Naive thymus-derived CD4-positive, alpha-beta T cell (primary cell): ENCODE measurements at regions of chr19 and their contacts with region 1.

Region 1: GRCh38 chr19:37906869-37907734 is at the start of gene SIPA1L3:
- DNase-seq: peak; percentile 77 to 91 (median 89)
- ATAC-seq: peak; percentile 99
- H3K4me3 ChIP-seq: peak within 1 kb of the TSS; percentile 99
- H3K4me3 Mint-ChIP-seq: peak within 1 kb of the TSS; percentile 69 to 96 (median 90)
- H3K27ac ChIP-seq: peak within 1 kb of the TSS; percentile 89
- H3K27ac Mint-ChIP-seq: peak within 1 kb of the TSS; percentile 67 to 95 (median 90)
- H3K4me1 ChIP-seq: peaks cover 6 to 9% of the 10 kb centered on the region in 2 donors
- H3K4me1 Mint-ChIP-seq: peaks cover 24 to 39% (median 35%) of the 10 kb centered on the region in 7 donors
- H3K27me3 ChIP-seq: no peaks in the 10 kb centered on the region
- H3K27me3 Mint-ChIP-seq: peaks cover 0 to 2% (median 0%) of the 10 kb centered on the region in 5 donors
- total RNA-seq, gene SIPA1L3: 17.4 to 38.7 (median 34.8) TPM

Region 2: DNA sequence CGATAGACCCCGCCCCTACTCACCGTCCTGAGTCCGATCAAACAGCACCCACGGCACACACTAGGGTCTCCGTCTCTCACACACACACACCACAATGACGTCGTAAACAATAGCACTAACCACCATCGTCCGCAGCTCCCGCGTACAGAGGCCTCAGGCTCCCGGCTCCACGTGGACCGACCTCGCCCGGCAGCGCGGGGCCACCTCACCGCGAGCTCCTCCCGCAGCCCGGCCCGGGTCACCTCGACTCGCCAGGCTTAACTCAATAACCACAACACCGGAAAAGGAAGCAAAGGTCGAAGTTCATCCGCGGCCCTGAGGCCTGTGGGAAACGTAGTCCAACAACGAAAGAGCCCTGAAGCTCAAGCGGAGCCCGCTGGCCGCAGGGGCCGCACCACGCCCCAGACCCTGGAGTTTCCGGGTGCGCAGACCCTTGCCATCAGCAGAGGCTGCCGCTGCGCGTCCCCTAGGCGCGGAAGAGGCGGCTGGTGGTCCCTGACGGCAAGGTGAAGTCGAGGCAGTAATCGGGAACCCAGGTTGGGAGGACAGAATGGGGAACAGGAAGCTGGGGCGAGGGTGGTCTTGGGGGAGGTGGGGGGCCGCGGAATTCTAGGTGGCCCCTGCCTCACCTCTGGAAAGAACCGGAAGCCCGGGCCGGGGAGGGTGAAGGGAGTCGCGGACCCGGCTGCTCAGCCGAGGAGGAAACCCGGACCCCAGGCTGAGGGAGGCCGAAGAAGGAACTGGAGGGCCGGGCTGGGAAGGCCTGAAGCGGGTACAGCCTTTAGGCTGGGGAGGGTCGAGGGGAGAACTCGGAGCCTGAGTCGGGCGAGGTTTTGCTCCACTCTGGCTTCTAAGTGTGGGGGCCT is 1333.8 kb before region 1 on chr19 and contains the start of gene ZNF529:
- CTCF ChIA-PET with region 1: no interaction called
- POLR2A ChIA-PET with region 1: no interaction called
- intact Hi-C with region 1: loop called in 1 of 2 experiments (anchors 5 kb)
- DNase-seq: peak; percentile 67 to 95 (median 85)
- ATAC-seq: peak; percentile 95
- H3K4me3 ChIP-seq: peak within 1 kb of the TSS; percentile 95
- H3K4me3 Mint-ChIP-seq: peak within 1 kb of the TSS; percentile 80 to 100 (median 93)
- H3K27ac ChIP-seq: peak within 1 kb of the TSS; percentile 98
- H3K27ac Mint-ChIP-seq: peak within 1 kb of the TSS; percentile 94 to 100 (median 98)
- H3K4me1 ChIP-seq: peaks cover 0 to 15% of the 10 kb centered on the region in 2 donors
- H3K4me1 Mint-ChIP-seq: peaks cover 23 to 46% (median 40%) of the 10 kb centered on the region in 7 donors
- H3K27me3 ChIP-seq: no peaks in the 10 kb centered on the region
- H3K27me3 Mint-ChIP-seq: no peaks in the 10 kb centered on the region
- total RNA-seq, gene ZNF529: 22.6 to 37.8 (median 33.8) TPM

Region 3: GRCh38 chr19:37594304-37594981 is 312.7 kb before region 1 on chr19 and contains the starts of genes ZNF540 and ZNF571:
- CTCF ChIA-PET with region 1: no interaction called
- POLR2A ChIA-PET with region 1: interaction called, 5 read pairs
- intact Hi-C with region 1: loop called in 1 of 2 experiments (anchors 1 kb)
- DNase-seq: peak; percentile 70 to 95 (median 92)
- ATAC-seq: peak; percentile 96
- H3K4me3 ChIP-seq: peak within 1 kb of the TSS; percentile 80
- H3K4me3 Mint-ChIP-seq: peak within 1 kb of the TSS; percentile 94 to 100 (median 98)
- H3K27ac ChIP-seq: peak within 1 kb of the TSS; percentile 93
- H3K27ac Mint-ChIP-seq: peak within 1 kb of the TSS; percentile 93 to 100 (median 99)
- H3K4me1 ChIP-seq: peaks cover 7 to 18% of the 10 kb centered on the region in 2 donors
- H3K4me1 Mint-ChIP-seq: peaks cover 13 to 56% (median 39%) of the 10 kb centered on the region in 7 donors
- H3K27me3 ChIP-seq: no peaks in the 10 kb centered on the region
- H3K27me3 Mint-ChIP-seq: no peaks in the 10 kb centered on the region
- total RNA-seq, gene ZNF540: 0.99 to 22.7 (median 17.6) TPM
- total RNA-seq, gene ZNF571: 1.5 to 12.4 (median 9.0) TPM

Region 4: DNA sequence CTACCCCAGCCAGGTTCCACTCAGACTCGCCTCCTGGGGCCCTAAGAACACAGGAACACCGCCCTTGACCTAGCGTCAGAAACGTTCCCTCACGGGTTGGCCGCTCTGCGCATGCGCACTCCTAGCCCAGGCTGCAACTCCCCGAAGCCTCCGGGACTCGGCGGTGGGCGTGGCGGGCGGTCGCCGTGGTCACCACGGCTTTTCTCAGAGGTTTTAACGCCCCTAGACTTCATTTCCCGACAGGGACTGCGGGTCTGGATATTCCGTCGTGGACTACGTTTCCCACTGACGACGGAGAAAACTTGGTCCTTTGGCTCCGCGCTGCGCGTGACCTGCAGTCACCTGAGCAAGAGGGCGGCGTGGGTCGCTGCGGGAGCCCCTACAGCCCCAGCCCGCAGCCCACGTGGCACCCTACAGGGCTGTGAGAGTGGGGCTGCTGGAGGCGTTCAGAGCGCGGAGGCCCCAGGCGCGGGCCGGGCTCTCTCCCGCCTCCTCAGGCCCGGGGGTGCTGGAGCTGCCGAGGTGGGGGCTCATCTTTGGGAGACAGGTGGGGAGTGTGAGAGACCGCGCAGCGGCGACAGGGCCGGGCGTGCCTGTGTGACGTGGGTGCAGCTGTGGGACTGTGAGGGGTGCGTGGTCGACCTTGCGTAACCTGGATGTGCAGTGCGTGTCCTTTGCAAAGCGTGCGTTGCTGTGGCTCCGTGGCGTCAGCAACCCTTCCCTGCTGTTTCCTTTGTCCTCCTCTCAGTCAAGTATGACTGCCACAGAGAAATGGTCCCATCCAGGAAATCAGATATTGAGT is 89.7 kb before region 1 on chr19:
- CTCF ChIA-PET with region 1: no interaction called
- POLR2A ChIA-PET with region 1: no interaction called
- intact Hi-C with region 1: no loop called
- DNase-seq: peak in 6 of 9 donors; percentile 7 to 38 (median 27)
- ATAC-seq: peak; percentile 78
- H3K4me3 ChIP-seq: no peak overlapping the region
- H3K4me3 Mint-ChIP-seq: peak overlapping the region in 6 of 10 donors; percentile 33 to 75 (median 62)
- H3K27ac ChIP-seq: no peak overlapping the region
- H3K27ac Mint-ChIP-seq: peak overlapping the region in 2 of 9 donors; percentile 53 to 87
- H3K4me1 ChIP-seq: no peaks in the 10 kb centered on the region
- H3K4me1 Mint-ChIP-seq: peaks cover 0 to 8% (median 0%) of the 10 kb centered on the region in 7 donors
- H3K27me3 ChIP-seq: no peaks in the 10 kb centered on the region
- H3K27me3 Mint-ChIP-seq: peaks cover 0 to 49% (median 29%) of the 10 kb centered on the region in 5 donors

Region 5: DNA sequence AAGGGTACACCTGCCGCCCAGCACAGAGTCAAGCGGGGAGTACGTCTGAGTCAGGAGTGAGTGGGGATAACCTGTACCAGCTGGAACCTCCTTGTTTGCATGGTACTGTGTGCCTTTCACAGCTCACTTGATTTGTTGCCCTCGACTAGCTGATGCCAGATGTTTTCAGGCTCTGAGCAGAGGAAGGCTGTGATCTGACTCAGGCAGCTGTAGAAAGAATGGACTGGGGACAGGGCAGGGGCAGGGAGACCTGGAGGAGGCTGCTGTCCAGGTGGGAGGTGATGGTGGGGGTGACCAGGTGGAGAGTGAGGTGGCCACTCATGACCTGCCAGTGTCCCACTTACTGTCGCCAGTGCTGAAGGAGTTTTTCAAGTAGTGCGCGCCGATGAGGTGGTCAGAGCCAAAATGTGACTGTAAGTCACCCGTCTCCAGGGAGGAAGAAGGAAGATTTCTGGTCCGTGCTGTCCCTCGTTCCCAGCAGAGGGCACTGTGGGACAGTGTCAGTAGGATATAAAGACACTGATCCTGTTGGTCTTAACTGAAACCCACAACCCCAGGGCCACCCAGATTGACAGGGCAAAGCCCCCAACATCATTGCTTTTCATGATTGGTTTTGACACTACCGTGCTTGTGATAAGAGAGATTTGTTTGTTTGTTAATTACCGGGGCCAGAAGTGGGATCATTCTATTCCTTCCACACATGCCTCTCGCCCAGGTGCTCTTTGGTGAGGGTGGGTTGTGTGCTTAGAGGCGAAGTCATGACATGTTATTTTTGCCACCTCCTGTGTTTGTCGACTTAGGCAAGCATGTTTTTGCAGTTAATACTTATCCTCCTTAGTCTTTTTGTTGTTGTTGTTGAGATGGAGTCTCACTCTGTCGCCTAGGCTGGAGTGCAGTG is 188.6 kb after region 1 on chr19:
- CTCF ChIA-PET with region 1: interaction called, 4 read pairs
- POLR2A ChIA-PET with region 1: no interaction called
- intact Hi-C with region 1: loop called (anchors 1 kb)
- DNase-seq: peak; percentile 7 to 49 (median 37)
- ATAC-seq: peak; percentile 79
- H3K4me3 ChIP-seq: no peak overlapping the region
- H3K4me3 Mint-ChIP-seq: no peak overlapping the region
- H3K27ac ChIP-seq: no peak overlapping the region
- H3K27ac Mint-ChIP-seq: peak overlapping the region in 6 of 9 donors; percentile 19 to 80 (median 46)
- H3K4me1 ChIP-seq: no peaks in the 10 kb centered on the region
- H3K4me1 Mint-ChIP-seq: peaks cover 0 to 8% (median 4%) of the 10 kb centered on the region in 7 donors
- H3K27me3 ChIP-seq: no peaks in the 10 kb centered on the region
- H3K27me3 Mint-ChIP-seq: no peaks in the 10 kb centered on the region

Region 6: DNA sequence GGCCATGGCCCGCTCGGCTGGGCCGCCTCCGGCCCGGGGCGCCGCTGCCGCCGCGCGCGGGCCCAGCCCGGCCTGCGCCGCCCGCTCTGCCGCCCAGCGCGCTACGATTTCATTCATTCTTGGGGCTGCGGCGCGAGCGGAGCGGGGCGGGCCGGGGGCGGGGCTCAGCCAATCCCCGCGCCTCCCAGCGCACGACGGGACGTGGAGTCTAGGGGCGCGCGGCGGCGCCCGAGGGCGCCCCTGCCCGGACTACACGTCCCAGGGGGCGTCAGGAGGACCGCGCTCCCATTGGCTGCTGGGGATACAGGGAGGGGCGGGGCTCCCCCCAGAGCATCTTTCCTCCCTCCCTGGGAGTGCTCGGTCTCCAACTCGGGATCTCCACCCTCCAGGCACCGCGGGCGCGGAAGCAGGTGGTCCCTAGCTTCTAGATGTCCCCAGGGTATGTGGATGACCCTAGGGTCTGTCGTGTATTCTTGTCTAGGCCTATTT is 322.5 kb after region 1 on chr19:
- CTCF ChIA-PET with region 1: no interaction called
- POLR2A ChIA-PET with region 1: no interaction called
- intact Hi-C with region 1: loop called (anchors 1 kb)
- DNase-seq: peak in 8 of 9 donors; percentile 20 to 75 (median 41)
- ATAC-seq: peak; percentile 91
- H3K4me3 ChIP-seq: no peak overlapping the region
- H3K4me3 Mint-ChIP-seq: peak overlapping the region; percentile 7 to 77 (median 54)
- H3K27ac ChIP-seq: no peak overlapping the region
- H3K27ac Mint-ChIP-seq: no peak overlapping the region
- H3K4me1 ChIP-seq: peaks cover 0 to 7% of the 10 kb centered on the region in 2 donors
- H3K4me1 Mint-ChIP-seq: peaks cover under 1 to 20% (median 15%) of the 10 kb centered on the region in 7 donors
- H3K27me3 ChIP-seq: peaks cover 5 to 16% of the 10 kb centered on the region in 2 donors
- H3K27me3 Mint-ChIP-seq: peaks cover 45 to 66% (median 57%) of the 10 kb centered on the region in 5 donors

Region 7: DNA sequence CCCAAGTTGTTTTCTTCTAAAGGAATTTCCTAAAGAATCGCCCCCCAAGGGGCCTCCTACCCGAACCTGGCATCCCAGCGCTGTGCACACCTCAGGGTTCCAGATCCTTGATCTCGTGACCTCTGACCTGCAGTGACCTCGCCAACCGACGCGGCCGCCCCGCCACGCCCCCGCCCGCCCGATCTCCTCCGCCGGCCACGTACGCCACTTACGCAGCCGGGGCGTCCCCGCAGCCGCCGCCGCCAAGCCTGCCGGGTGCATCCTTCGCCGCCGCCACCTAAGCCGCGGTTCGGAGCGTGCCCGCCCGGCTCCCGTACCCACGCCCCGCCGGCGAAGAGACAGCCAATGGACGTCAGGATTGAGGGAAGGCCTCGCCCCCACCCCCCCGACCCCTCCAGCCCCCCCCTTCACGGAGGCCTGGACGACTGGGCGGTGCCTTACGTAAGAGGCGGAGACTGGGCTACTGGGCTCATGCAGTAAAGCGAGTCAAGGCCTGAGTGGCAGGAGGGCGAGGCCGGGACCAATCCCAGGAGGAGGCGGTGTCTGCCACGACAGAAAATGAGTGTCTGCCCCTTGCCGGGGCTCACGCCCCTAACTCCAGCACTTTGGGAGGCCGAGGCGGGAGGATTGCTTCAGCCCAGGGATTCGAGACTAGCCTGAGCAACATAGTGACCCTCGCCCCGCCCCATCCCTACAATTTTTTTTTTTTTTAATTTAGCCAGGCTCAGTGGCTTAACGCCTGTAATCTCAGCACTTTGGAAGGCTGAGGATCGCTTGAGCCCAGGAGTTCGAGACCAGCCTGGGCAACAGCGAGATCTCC is 408.8 kb after region 1 on chr19 and contains the start of gene YIF1B:
- CTCF ChIA-PET with region 1: interaction called, 3 read pairs
- POLR2A ChIA-PET with region 1: interaction called, 3 read pairs
- intact Hi-C with region 1: loop called (anchors 1 kb)
- DNase-seq: peak; percentile 93 to 97 (median 95)
- ATAC-seq: peak; percentile 95
- H3K4me3 ChIP-seq: peak within 1 kb of the TSS; percentile 90
- H3K4me3 Mint-ChIP-seq: peak within 1 kb of the TSS; percentile 87 to 96 (median 91)
- H3K27ac ChIP-seq: peak within 1 kb of the TSS; percentile 97
- H3K27ac Mint-ChIP-seq: peak within 1 kb of the TSS; percentile 90 to 97 (median 93)
- H3K4me1 ChIP-seq: peaks cover 14 to 30% of the 10 kb centered on the region in 2 donors
- H3K4me1 Mint-ChIP-seq: peaks cover 29 to 57% (median 48%) of the 10 kb centered on the region in 7 donors
- H3K27me3 ChIP-seq: no peaks in the 10 kb centered on the region
- H3K27me3 Mint-ChIP-seq: no peaks in the 10 kb centered on the region
- total RNA-seq, gene YIF1B: 26.1 to 84.7 (median 38.0) TPM

Region 8: GRCh38 chr19:38634757-38635482 is 727.8 kb after region 1 on chr19:
- CTCF ChIA-PET with region 1: no interaction called
- POLR2A ChIA-PET with region 1: no interaction called
- intact Hi-C with region 1: loop called in 1 of 2 experiments (anchors 10 kb)
- DNase-seq: peak; percentile 42 to 79 (median 58)
- ATAC-seq: peak; percentile 64
- H3K4me3 ChIP-seq: no peak overlapping the region
- H3K4me3 Mint-ChIP-seq: peak overlapping the region in 9 of 10 donors; percentile 21 to 65 (median 47)
- H3K27ac ChIP-seq: no peak overlapping the region
- H3K27ac Mint-ChIP-seq: peak overlapping the region; percentile 2 to 81 (median 69)
- H3K4me1 ChIP-seq: peaks cover 23 to 24% of the 10 kb centered on the region in 2 donors
- H3K4me1 Mint-ChIP-seq: peaks cover 14 to 40% (median 35%) of the 10 kb centered on the region in 7 donors
- H3K27me3 ChIP-seq: no peaks in the 10 kb centered on the region
- H3K27me3 Mint-ChIP-seq: no peaks in the 10 kb centered on the region